ENCODE measurements at regions of chr9 and their contacts with region 1.

Region 1: GRCh38 chr9:120348951-120349429 is 231.0 kb downstream of the CDK5RAP2 start:
- DNase-seq: peak; percentile 11
- H3K4me3 ChIP-seq: no peak overlapping the region
- H3K27ac ChIP-seq: no peak overlapping the region
- H3K4me1 ChIP-seq: peaks cover 5% of the 10 kb centered on the region
- H3K27me3 ChIP-seq: no peaks in the 10 kb centered on the region
- CTCF ChIP-seq: peak; percentile 56 to 79

Region 2: GRCh38 chr9:118829334-118829733 is 1519.7 kb before region 1 on chr9:
- CTCF ChIA-PET with region 1: no interaction called
- dilution Hi-C with region 1: no loop called
- in situ Hi-C with region 1: no loop called
- intact Hi-C with region 1: loop called (anchors 5 kb)
- DNase-seq: peak; percentile 22
- H3K4me3 ChIP-seq: no peak overlapping the region
- H3K27ac ChIP-seq: no peak overlapping the region
- H3K4me1 ChIP-seq: no peaks in the 10 kb centered on the region
- H3K27me3 ChIP-seq: no peaks in the 10 kb centered on the region
- CTCF ChIP-seq: no peak

Region 3: DNA sequence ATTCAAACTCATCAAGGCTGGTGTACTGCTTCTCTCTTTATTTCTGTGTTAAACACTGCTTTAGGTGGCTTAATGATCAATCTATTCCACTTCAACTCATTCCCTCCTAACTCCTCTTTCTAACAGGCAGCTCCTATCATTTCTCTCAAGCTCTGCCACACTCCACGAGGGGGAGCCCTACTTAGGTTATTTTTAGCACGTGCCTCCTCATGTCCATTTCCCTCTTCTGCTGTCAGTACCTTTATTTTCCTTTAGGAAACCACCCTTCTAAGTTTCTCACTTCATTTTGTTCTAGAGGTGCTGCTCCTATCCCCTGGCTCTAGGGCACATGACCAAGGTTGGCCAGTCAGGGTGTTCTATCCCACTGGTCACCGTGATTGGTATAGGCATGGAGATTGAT is 973.1 kb before region 1 on chr9:
- CTCF ChIA-PET with region 1: no interaction called
- dilution Hi-C with region 1: no loop called
- in situ Hi-C with region 1: loop called in 1 of 2 experiments (anchors 10 kb)
- intact Hi-C with region 1: loop called (anchors 1 kb)
- DNase-seq: peak; percentile 33
- H3K4me3 ChIP-seq: no peak overlapping the region
- H3K27ac ChIP-seq: no peak overlapping the region
- H3K4me1 ChIP-seq: no peaks in the 10 kb centered on the region
- H3K27me3 ChIP-seq: peaks cover 2% of the 10 kb centered on the region
- CTCF ChIP-seq: peak; percentile 59 to 71

Region 4: DNA sequence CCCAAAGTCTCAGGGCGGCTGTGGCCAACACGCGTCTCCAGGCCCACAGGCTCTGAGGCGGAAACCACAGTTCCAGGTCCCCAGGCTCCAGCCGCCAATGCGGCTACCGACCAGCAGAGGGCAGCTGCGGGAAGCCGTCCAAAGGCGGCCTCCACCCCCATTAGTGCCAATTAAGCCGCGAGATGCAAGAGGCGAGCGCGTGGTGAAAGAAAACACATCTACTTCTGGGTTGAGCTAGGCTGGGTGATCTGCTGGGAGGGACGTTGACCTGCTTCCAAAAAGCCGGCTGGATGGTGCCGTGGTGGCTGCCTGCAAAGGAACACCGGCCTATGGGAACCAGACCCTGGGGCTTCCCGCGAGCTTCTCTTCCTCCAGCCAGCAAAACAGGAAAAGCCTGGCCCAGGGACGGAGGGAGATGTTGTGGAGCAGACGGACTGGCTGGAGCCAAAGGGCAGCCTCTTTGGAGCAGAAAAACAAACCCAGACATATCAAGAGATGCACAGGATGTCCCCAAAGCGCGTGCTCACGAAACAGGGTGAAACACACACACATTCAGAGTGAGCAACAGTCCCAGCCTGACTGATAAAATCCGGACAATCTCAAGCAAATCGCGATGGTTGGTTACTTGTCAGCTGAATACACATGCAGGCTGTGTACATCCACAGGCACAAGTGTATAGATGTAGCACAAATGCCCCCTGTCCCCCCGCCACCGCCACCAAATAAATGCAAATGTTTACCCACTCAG is 792.7 kb before region 1 on chr9:
- CTCF ChIA-PET with region 1: no interaction called
- dilution Hi-C with region 1: no loop called
- in situ Hi-C with region 1: loop called in 1 of 2 experiments (anchors 25 kb)
- intact Hi-C with region 1: loop called (anchors 1 kb)
- DNase-seq: peak; percentile 47
- H3K4me3 ChIP-seq: peak overlapping the region in 2 of 3 experiments; percentile 14 to 26
- H3K27ac ChIP-seq: no peak overlapping the region
- H3K4me1 ChIP-seq: no peaks in the 10 kb centered on the region
- H3K27me3 ChIP-seq: no peaks in the 10 kb centered on the region
- CTCF ChIP-seq: peak; percentile 90 to 97

Region 5: DNA sequence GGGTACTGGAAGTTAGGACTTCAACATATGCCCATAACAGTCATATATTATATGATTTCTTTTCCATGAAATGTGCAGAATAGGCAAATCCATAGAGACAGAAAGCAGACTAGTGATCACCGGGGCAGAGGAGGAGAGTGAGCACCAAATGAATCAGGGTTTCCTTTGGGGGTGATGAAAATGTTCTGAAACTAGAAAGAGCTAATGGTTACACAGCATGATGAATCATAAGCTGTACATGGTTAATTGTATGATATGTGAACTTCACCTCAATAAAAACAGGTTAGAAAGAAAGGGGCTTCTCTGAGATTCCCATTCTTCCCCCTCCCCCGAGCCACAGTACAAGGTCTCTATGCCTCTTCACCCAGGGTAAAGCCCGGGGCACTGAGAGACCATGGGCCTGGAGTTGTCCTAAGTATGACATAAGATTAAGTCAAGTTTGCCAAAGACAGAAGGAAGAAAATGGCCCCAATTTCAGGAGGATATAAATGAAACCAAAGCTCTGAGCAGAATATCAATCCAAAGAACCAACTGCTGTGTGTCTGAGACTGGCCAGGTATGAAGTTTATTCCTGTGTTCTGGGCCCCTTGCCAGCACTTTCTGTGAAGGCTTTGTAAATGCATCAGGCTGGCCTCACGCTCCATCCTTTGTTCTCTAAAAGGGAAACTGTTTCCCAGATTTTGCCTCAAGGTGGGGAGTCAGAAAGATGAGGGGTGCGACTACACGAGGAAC is 12.8 kb before region 1 on chr9:
- CTCF ChIA-PET with region 1: interaction called, 19 read pairs
- dilution Hi-C with region 1: no loop called
- in situ Hi-C with region 1: no loop called
- intact Hi-C with region 1: no loop called
- DNase-seq: peak; percentile 43
- H3K4me3 ChIP-seq: no peak overlapping the region
- H3K27ac ChIP-seq: no peak overlapping the region
- H3K4me1 ChIP-seq: peaks cover 15% of the 10 kb centered on the region
- H3K27me3 ChIP-seq: no peaks in the 10 kb centered on the region
- CTCF ChIP-seq: no peak

Region 6: GRCh38 chr9:120531683-120532300 is 182.8 kb after region 1 on chr9:
- CTCF ChIA-PET with region 1: interaction called, 4 read pairs
- dilution Hi-C with region 1: no loop called
- in situ Hi-C with region 1: no loop called
- intact Hi-C with region 1: loop called (anchors 1 kb)
- DNase-seq: peak; percentile 59
- H3K4me3 ChIP-seq: no peak overlapping the region
- H3K27ac ChIP-seq: peak overlapping the region; percentile 93
- H3K4me1 ChIP-seq: peaks cover 32% of the 10 kb centered on the region
- H3K27me3 ChIP-seq: no peaks in the 10 kb centered on the region
- CTCF ChIP-seq: peak; percentile 49 to 67

Measured in mammary epithelial cell (primary cell).